CD4-positive, alpha-beta T cell (primary cell): ENCODE measurements at regions of chr3 and their contacts with region 1.

Region 1: DNA sequence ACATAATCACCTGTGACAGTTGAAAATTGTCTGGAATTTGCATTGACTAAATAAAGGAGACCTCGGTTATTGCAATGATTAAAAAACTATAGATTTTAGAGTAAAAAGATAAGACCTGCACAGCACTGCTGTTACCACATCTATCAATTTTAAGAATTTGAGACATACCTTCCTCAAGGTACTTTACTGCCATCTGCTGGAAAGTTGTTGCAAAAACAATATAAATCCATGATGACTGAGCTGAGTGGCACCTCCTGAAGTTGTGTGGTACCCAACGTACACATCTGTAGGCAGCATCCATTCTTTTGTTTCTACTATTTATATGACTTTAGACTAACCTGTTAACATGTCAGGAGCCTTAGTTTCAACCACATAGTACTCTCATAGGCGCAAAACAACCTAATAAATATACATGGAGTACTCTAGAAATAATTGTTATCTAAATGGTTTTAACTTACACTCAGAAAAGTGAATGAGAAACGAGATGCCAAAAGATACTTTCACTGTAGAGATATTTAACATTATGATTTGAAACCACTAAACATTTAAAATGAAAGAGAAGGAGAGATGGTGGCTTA is 106.7 kb downstream of the GHSR start:
- DNase-seq: peak in 5 of 14 experiments; percentile 3 to 75 (median 70)
- ATAC-seq: peak; percentile 68
- H3K4me3 ChIP-seq: no peak overlapping the region
- H3K4me3 Mint-ChIP-seq: no peak overlapping the region
- H3K27ac ChIP-seq: no peak overlapping the region
- H3K27ac Mint-ChIP-seq: no peak overlapping the region
- H3K4me1 ChIP-seq: no peaks in the 10 kb centered on the region
- H3K4me1 Mint-ChIP-seq: no peaks in the 10 kb centered on the region
- H3K27me3 ChIP-seq: no peaks in the 10 kb centered on the region
- H3K27me3 Mint-ChIP-seq: no peaks in the 10 kb centered on the region
- CTCF ChIP-seq: peak; percentile 77

Region 2: GRCh38 chr3:170961616-170962400 is 1379.8 kb before region 1 on chr3:
- CTCF ChIA-PET with region 1: interaction called, 5 read pairs
- POLR2A ChIA-PET with region 1: no interaction called
- intact Hi-C with region 1: loop called (anchors 1 to 2 kb)
- DNase-seq: peak in 4 of 14 experiments; percentile 4 to 45 (median 36)
- ATAC-seq: no peak
- H3K4me3 ChIP-seq: no peak overlapping the region
- H3K4me3 Mint-ChIP-seq: no peak overlapping the region
- H3K27ac ChIP-seq: no peak overlapping the region
- H3K27ac Mint-ChIP-seq: no peak overlapping the region
- H3K4me1 ChIP-seq: no peaks in the 10 kb centered on the region
- H3K4me1 Mint-ChIP-seq: no peaks in the 10 kb centered on the region
- H3K27me3 ChIP-seq: no peaks in the 10 kb centered on the region
- H3K27me3 Mint-ChIP-seq: peaks cover 7% of the 10 kb centered on the region
- CTCF ChIP-seq: peak; percentile 64

Region 3: DNA sequence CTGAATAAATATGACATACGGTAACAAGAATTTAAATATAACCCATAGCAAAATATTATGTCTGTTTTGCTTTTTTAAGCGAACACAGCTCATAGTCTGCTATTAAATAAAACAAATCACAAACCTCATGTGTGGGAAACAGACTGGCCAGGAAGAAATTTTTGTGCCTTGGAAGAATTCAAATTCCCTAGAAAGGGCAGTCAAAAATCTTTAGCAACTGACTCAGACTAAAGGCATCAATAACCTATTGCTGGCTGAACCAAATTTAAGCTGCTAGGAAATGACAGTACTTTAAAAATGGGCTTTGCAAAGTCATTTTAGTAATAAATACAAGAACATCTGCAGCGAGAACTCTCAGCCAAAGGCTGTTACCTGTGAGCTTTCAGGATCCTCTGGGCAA is 682.7 kb before region 1 on chr3:
- CTCF ChIA-PET with region 1: no interaction called
- POLR2A ChIA-PET with region 1: no interaction called
- intact Hi-C with region 1: no loop called
- DNase-seq: no peak
- ATAC-seq: no peak
- H3K4me3 ChIP-seq: no peak overlapping the region
- H3K4me3 Mint-ChIP-seq: no peak overlapping the region
- H3K27ac ChIP-seq: no peak overlapping the region
- H3K27ac Mint-ChIP-seq: no peak overlapping the region
- H3K4me1 ChIP-seq: no peaks in the 10 kb centered on the region
- H3K4me1 Mint-ChIP-seq: no peaks in the 10 kb centered on the region
- H3K27me3 ChIP-seq: no peaks in the 10 kb centered on the region
- H3K27me3 Mint-ChIP-seq: peaks cover 20% of the 10 kb centered on the region
- CTCF ChIP-seq: no peak

Region 4: GRCh38 chr3:171703756-171704401 is 637.7 kb before region 1 on chr3:
- CTCF ChIA-PET with region 1: no interaction called
- POLR2A ChIA-PET with region 1: no interaction called
- intact Hi-C with region 1: loop called (anchors 5 to 10 kb)
- DNase-seq: peak in 6 of 14 experiments; percentile 0 to 38 (median 7)
- ATAC-seq: no peak
- H3K4me3 ChIP-seq: no peak overlapping the region
- H3K4me3 Mint-ChIP-seq: no peak overlapping the region
- H3K27ac ChIP-seq: no peak overlapping the region
- H3K27ac Mint-ChIP-seq: no peak overlapping the region
- H3K4me1 ChIP-seq: no peaks in the 10 kb centered on the region
- H3K4me1 Mint-ChIP-seq: no peaks in the 10 kb centered on the region
- H3K27me3 ChIP-seq: peaks cover 5 to 6% of the 10 kb centered on the region in 2 experiments
- H3K27me3 Mint-ChIP-seq: peaks cover 14% of the 10 kb centered on the region
- CTCF ChIP-seq: peak; percentile 11

Region 5: GRCh38 chr3:171829841-171830517 is 511.6 kb before region 1 on chr3:
- CTCF ChIA-PET with region 1: no interaction called
- POLR2A ChIA-PET with region 1: no interaction called
- intact Hi-C with region 1: loop called in 1 of 2 experiments (anchors 10 kb)
- DNase-seq: peak in 2 of 14 experiments; percentile 32 to 36
- ATAC-seq: no peak
- H3K4me3 ChIP-seq: no peak overlapping the region
- H3K4me3 Mint-ChIP-seq: no peak overlapping the region
- H3K27ac ChIP-seq: no peak overlapping the region
- H3K27ac Mint-ChIP-seq: no peak overlapping the region
- H3K4me1 ChIP-seq: peaks cover 13% of the 10 kb centered on the region
- H3K4me1 Mint-ChIP-seq: no peaks in the 10 kb centered on the region
- H3K27me3 ChIP-seq: no peaks in the 10 kb centered on the region
- H3K27me3 Mint-ChIP-seq: peaks cover 4% of the 10 kb centered on the region
- CTCF ChIP-seq: no peak